Adrenal gland (tissue), 19 donors: ENCODE measurements at regions of chr1 and their contacts with region 1.

Region 1: DNA sequence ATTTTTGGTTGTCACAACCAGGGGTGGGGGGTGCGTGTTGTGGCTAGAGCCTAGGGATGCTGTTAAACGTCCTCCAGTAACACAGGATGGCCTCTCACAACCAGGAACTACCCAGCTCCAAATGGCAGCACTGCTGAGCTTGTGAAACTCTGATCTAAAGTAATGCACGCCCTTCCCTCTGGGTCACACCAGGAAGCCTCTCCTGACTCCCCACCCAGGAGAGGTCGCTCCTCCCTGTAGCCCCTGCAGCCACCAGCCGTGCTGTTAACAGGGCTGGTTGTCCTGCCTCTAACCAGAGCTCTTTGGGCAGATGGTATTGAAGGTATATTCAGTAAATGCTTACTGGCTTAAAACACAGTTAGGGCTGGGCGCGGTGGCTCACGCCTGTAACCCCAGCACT is 73.2 kb downstream of the NKAIN1 start:
- DNase-seq: no peak
- H3K4me3 ChIP-seq: no peak overlapping the region
- H3K27ac ChIP-seq: no peak overlapping the region
- H3K4me1 ChIP-seq: peaks cover 0 to 13% of the 10 kb centered on the region in 2 donors
- H3K27me3 ChIP-seq: no peaks in the 10 kb centered on the region
- CTCF ChIP-seq: no peak
- POLR2A ChIP-seq: no peak

Region 2: GRCh38 chr1:30670240-30671060 is 496.0 kb before region 1 on chr1:
- intact Hi-C with region 1: no loop called
- DNase-seq: no peak
- H3K4me3 ChIP-seq: no peak overlapping the region
- H3K27ac ChIP-seq: no peak overlapping the region
- H3K4me1 ChIP-seq: no peaks in the 10 kb centered on the region
- H3K27me3 ChIP-seq: no peaks in the 10 kb centered on the region
- CTCF ChIP-seq: no peak
- POLR2A ChIP-seq: no peak

Region 3: GRCh38 chr1:30868833-30869435 is 297.5 kb before region 1 on chr1:
- intact Hi-C with region 1: no loop called
- DNase-seq: no peak
- H3K4me3 ChIP-seq: no peak overlapping the region
- H3K27ac ChIP-seq: no peak overlapping the region
- H3K4me1 ChIP-seq: no peaks in the 10 kb centered on the region
- H3K27me3 ChIP-seq: no peaks in the 10 kb centered on the region
- CTCF ChIP-seq: no peak
- POLR2A ChIP-seq: no peak

Region 4: DNA sequence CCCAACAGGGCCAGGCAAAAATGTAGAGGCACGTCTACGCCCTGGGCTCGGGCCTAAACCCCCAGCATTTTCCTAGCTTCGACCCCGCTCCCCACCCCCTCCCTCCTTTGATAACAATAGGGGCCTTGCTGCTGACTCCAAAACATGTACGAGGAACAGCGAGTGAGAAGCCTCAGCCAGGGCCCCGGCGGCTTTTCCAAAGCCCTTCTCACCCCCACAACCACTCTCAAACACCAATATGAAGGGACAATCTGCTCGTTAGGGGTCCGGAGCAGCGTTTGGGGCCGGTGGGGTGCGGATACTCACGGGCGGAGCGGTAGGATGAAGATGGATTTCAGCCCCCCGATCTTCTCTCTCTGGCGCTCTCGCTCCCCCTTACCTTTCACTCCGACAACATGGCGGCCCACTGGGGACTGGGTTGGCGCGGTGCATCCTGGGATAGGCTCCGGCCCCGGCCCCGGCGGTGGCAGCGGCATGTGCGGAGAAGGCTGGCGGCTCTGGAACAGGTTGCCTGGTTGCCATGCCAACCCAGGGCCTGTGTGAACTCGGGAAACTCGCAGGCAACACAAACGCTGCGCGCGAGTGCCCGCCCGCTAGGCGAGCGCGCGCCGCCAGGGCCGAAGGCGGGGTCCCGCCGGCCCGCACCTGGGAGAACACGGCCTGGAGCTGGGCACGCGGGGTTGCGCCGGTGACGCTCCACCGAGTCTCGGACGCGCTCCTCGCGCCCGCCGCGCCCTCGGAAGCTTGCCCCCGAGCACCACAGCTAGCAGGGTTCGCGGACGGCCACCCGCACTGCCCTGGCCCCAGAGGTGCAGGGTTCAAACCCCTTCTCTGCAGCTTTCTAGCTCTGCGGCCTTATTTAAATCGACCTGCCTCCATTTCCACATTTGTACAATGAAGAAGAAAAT is 100.9 kb before region 1 on chr1 and contains the start of gene PUM1:
- intact Hi-C with region 1: loop called in 1 of 2 experiments (anchors 10 kb)
- DNase-seq: peak; percentile 99 to 100 (median 99)
- H3K4me3 ChIP-seq: peak within 1 kb of the TSS; percentile 21 to 89 (median 88)
- H3K27ac ChIP-seq: peak within 1 kb of the TSS; percentile 42 to 96 (median 91)
- H3K4me1 ChIP-seq: peaks cover 18 to 35% of the 10 kb centered on the region in 2 donors
- H3K27me3 ChIP-seq: no peaks in the 10 kb centered on the region
- CTCF ChIP-seq: peak in 3 of 6 experiments; percentile 12 to 51 (median 39)
- POLR2A ChIP-seq: peak; percentile 43 to 90
- total RNA-seq, gene PUM1: 71.4 to 167 (median 101) TPM